ENCODE measurements at regions of chr11 and their contacts with region 1.

Region 1: GRCh38 chr11:3217676-3218482 is 734 bp downstream of the MRGPRG start:
- DNase-seq: peak in 1 of 2 donors; percentile 46
- H3K4me3 ChIP-seq: no peak overlapping the region
- H3K27ac ChIP-seq: no peak overlapping the region
- H3K4me1 ChIP-seq: peaks cover 0 to 3% of the 10 kb centered on the region in 2 donors
- H3K27me3 ChIP-seq: peaks cover 0 to 31% of the 10 kb centered on the region in 2 donors
- CTCF ChIP-seq: no peak
- POLR2A ChIP-seq: no peak

Region 2: DNA sequence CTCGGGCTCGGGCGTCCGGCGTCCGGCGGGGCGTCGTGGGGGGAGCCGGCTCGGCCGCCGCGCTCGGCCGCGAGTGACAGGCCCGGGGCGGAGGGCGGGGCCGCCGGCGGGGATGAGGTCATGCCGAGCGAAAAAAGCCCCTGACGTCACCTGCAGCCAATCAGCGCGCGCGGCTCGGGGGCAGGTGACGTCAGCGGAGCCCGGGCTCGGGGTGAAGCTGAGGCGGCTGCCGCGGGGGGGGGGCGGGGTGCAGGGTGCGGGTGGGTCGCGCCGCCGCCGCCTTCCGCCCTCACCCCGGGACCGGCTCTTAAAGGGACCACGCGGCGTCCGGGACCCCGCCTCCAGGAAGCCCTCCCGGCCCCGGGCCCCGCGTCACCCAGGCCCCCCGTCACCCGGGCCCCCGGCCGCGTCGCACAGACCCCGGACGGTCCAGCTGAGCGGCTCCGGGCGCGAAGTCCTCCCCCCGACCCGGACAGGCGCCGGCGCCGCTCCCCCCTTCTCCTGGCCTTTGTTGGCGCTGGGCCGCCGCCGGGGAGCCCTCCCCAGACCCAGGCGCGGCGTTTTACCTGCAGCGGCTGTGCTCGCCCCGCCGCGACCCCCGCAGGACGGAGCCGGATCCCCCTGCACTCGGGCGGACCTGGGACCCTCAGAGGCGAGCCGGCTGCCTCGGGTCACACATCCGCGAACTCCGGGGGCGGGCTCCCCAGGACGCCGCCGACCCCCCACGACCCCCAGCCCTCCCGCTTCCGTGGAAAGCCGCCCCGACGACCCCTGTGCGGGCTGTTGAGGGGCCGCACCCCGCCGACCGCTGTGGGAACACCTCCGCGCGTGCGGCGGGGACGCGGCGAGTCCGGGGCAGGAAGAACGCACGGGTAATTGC is 1645.4 kb before region 1 on chr11 and contains the start of gene DUSP8:
- intact Hi-C with region 1: no loop called
- DNase-seq: peak; percentile 84 to 89
- H3K4me3 ChIP-seq: peak within 1 kb of the TSS; percentile 50 to 77 (median 61)
- H3K27ac ChIP-seq: peak within 1 kb of the TSS; percentile 75 to 92
- H3K4me1 ChIP-seq: peaks cover 0 to 7% of the 10 kb centered on the region in 2 donors
- H3K27me3 ChIP-seq: peaks cover 0 to 15% of the 10 kb centered on the region in 2 donors
- CTCF ChIP-seq: no peak
- POLR2A ChIP-seq: no peak
- total RNA-seq, gene DUSP8: 0.80 to 2.9 (median 1.6) TPM

Region 3: DNA sequence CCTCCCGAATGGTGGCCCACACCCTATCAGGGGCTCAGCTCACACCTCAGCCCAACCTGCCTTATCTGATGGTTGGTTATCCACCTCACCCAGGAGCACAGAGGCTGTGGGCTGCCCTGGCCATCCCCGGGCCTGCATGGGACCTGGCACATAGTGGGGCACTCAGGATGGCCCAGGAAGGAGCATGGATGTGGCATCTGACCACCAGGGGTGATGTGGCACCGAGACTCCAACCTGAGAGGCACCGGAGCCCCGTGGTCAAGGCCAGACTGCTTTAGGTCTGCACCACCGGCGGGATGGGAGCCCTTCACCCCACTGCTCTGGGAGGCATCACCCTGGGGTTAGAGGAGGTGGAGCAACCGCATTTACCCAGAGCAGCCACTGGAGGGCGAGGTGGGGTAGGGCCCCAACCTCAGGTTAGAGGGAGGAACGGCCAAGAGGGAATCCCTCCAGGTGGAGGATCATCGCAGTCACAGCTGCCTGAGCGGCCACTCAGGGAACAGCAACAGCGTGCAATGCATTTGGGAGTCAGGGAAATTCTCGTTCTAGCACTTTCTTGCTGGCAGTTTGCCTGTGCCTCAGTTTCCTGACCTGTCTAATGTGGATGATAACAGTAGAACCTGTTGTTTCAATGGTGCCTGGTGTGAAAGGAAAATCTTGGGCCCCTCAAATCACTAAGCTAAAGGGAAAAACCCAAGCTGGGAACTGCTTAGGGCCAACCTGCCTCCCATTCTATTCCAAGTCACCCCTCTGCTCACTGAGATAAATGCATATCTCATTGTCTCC is 107.8 kb before region 1 on chr11:
- intact Hi-C with region 1: loop called (anchors 10 kb)
- DNase-seq: peak in 1 of 2 donors; percentile 56
- H3K4me3 ChIP-seq: no peak overlapping the region
- H3K27ac ChIP-seq: no peak overlapping the region
- H3K4me1 ChIP-seq: no peaks in the 10 kb centered on the region
- H3K27me3 ChIP-seq: no peaks in the 10 kb centered on the region
- CTCF ChIP-seq: peak; percentile 47 to 81 (median 63)
- POLR2A ChIP-seq: no peak

Measured in breast epithelium (tissue), 4 donors.